ENCODE measurements at regions of chr5 and their contacts with region 1.

Region 1: GRCh38 chr5:31728039-31728438 is 89.1 kb downstream of the PDZD2 start:
- DNase-seq: no peak
- ATAC-seq: no peak
- H3K4me3 Mint-ChIP-seq: no peak overlapping the region
- H3K27ac Mint-ChIP-seq: no peak overlapping the region
- H3K4me1 Mint-ChIP-seq: peaks cover 46% of the 10 kb centered on the region
- H3K27me3 Mint-ChIP-seq: peaks cover 5% of the 10 kb centered on the region; the same call in 1 of the 2 replicates
- CTCF ChIP-seq: no peak

Region 2: DNA sequence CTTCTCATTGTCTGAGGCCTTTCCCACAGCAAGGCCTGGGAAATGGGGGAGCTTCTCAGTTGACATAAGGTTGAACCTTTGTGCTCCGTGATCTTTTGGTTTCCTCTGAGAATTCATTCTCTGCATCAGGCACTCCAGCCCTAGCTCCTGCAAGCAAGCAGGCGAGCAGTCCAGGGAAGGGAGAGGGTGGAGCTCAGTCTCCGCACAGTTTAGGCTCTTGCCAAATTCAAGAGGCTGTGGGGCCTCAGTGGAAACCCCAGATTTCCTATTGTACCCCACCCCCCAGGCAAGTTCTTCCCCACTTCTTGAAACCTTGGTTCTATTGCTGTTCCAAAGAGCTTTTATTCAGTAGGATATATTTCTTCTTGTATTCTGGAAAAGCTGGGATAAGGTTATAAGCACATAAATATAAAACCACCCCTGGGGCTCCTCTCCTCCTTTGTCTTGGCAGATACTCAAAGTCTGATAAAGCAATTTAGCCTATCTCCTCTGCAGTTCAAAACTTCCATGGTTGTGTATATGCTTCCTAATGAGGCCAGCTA is 58.1 kb after region 1 on chr5:
- CTCF ChIA-PET with region 1: no interaction called
- POLR2A ChIA-PET with region 1: interaction called, 11 read pairs
- DNase-seq: no peak
- ATAC-seq: no peak
- H3K4me3 Mint-ChIP-seq: no peak overlapping the region
- H3K27ac Mint-ChIP-seq: no peak overlapping the region
- H3K4me1 Mint-ChIP-seq: peaks cover 15% of the 10 kb centered on the region
- H3K27me3 Mint-ChIP-seq: no peaks in the 10 kb centered on the region
- CTCF ChIP-seq: no peak

Measured in WTC11 (cell line).